Posterior cingulate gyrus (tissue), 11 donors: ENCODE measurements at regions of chr21 and their contacts with region 1.

Region 1: GRCh38 chr21:37711836-37712568 is 204.3 kb downstream of the KCNJ6 start:
- DNase-seq: peak; percentile 21 to 95 (median 66)

Region 2: GRCh38 chr21:37484535-37485474 is 227.2 kb before region 1 on chr21:
- intact Hi-C with region 1: no loop called
- DNase-seq: no peak

Region 3: GRCh38 chr21:37916310-37917051 is 204.5 kb after region 1 on chr21 and contains the start of gene KCNJ6:
- intact Hi-C with region 1: loop called (anchors 5 kb)
- DNase-seq: peak; percentile 24 to 96 (median 66)

Region 4: DNA sequence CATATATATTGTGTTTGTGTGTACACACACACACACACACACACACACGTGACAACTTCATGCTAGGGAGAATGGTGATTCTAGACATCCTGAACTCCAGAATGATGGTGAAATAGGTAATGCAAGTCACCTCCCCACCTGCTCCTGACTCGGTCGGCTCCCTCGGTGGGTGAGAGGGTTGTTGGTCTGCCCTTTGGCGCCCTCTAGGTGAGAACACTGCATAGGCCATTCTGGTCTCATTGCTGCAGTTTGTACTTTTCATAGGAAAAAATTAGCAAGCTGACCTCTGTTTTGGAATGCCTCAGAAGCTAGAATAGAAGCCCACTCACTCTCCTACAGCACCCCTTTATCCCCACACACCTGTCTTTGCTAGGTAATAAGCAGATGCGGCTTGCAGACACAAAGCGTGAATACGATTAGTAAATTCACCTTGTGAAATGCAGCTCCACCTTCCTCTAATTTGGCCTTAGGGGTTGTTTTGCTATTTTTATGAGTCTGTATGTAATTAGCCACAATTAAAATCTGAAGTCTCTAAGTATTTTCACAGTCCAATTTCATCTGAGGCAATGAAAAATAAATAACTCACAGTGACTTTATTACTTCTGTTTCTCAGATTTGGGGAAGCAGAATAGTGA is 414.8 kb after region 1 on chr21:
- intact Hi-C with region 1: loop called (anchors 1 kb)
- DNase-seq: peak in 9 of 10 donors; percentile 37 to 88 (median 60)